Activated naive CD4-positive, alpha-beta T cell treated with anti-CD3 and anti-CD28 coated beads for 36 hours (primary cell): ENCODE measurements at regions of chr3 and their contacts with region 1.

Region 1: DNA sequence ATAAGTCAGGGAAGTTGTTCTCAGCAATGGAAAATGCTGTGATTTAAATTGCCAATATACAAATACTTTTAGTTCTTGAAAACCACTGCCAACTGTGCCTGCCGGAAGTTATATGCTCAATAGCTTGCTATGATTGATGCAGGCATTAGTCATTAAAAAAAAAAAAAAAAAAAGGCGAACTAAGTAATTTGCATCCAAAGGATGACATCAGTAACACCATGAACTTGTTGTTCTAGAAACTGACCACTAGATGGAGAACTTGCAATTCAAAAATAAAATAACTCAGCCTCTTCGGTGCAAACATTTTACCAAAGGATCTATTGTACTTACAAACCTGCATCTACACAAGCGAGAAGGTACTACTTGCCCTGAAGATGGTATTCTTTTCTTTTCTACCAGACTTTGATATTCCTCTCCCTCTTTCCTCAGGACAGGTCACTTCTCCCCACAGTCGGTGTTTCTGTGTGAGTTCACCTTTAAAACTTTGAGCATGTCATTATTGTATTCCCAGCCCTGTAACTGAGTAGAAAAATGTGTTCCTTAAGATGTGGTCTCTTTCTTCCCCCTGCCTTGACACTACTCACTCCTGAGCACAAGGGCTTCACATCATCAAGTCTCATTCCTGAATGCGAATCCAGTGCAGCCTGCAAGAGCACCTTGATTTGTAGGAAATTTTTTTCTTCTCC is 115.0 kb upstream of the VEPH1 start:
- DNase-seq: peak; percentile 26
- H3K4me3 Mint-ChIP-seq: no peak overlapping the region
- H3K27ac Mint-ChIP-seq: no peak overlapping the region
- H3K4me1 Mint-ChIP-seq: peaks cover 5% of the 10 kb centered on the region
- H3K27me3 Mint-ChIP-seq: peaks cover 13% of the 10 kb centered on the region

Region 2: DNA sequence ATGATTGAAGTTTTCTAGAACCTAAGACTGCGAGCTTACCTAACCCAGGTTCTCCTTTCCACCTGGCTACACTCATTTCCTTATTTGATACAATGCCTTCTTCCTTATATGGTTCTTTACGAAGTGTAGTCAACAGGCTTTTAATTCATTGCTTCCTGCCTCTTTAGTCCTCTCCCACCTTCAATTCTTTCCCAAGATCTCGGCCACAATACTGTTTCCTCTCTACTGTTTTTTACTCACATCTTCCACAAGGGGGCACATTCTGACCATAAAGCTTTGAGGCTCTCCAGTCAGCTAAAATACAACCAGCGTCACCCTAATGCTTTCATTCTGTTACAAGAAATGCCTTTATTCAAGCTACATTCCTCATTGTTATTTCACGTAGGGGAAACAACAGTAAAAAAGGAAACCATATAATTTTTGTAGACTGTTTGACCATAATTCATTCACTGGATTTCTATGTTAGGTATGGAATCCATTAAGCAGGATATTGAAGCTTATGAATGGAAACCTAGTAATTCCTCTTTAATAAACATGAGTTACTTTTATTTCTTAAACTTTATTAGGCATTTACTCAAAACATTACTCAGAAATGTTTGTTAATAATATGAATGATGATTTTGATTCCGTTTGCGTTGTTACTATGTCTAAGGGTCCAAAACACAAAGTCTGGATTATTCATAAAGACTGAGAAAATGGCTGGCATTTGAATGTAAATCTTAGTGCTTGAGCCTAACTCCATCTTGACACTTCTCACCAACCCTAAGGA is 85.5 kb before region 1 on chr3:
- CTCF ChIA-PET with region 1: interaction called, 3 read pairs
- intact Hi-C with region 1: loop called (anchors 1 kb)
- DNase-seq: peak; percentile 31
- H3K4me3 Mint-ChIP-seq: no peak overlapping the region
- H3K27ac Mint-ChIP-seq: no peak overlapping the region
- H3K4me1 Mint-ChIP-seq: no peaks in the 10 kb centered on the region
- H3K27me3 Mint-ChIP-seq: no peaks in the 10 kb centered on the region

Region 3: GRCh38 chr3:157606011-157606851 is 12.0 kb before region 1 on chr3:
- CTCF ChIA-PET with region 1: interaction called, 10 read pairs
- intact Hi-C with region 1: no loop called
- DNase-seq: peak; percentile 77
- H3K4me3 Mint-ChIP-seq: no peak overlapping the region
- H3K27ac Mint-ChIP-seq: no peak overlapping the region
- H3K4me1 Mint-ChIP-seq: peaks cover 7% of the 10 kb centered on the region
- H3K27me3 Mint-ChIP-seq: peaks cover 5% of the 10 kb centered on the region

Region 4: DNA sequence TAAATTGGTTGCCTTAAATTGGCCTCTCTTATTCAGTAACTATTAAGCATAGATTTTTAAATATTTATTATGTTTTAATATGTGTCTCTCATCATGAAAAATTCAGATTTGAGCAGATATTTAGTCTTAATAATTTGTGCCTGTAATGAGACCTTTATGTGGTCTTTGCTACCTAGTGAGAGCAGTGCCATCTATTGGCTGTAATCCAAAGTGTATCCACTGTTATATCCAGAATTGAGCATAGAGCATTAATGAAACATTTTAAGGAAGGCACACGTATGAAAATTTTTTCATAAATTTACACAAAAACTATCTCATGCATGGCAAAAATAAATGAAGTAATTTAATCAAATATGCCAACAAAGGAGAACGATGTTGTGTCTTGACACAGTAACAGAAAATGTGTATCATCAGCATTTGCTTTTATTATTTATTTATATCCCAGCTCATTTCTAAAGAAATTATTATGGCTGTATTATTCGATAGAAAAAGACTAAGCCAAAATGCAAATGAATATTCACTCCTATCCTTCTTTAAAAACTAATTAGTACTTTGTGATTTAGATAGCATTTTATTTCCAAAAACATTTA is 695.2 kb after region 1 on chr3:
- CTCF ChIA-PET with region 1: no interaction called
- intact Hi-C with region 1: loop called (anchors 2 kb)
- DNase-seq: no peak
- H3K4me3 Mint-ChIP-seq: no peak overlapping the region
- H3K27ac Mint-ChIP-seq: no peak overlapping the region
- H3K4me1 Mint-ChIP-seq: peaks cover 1% of the 10 kb centered on the region
- H3K27me3 Mint-ChIP-seq: no peaks in the 10 kb centered on the region

Region 5: GRCh38 chr3:158434412-158435038 is 816.3 kb after region 1 on chr3:
- CTCF ChIA-PET with region 1: no interaction called
- intact Hi-C with region 1: loop called (anchors 1 kb)
- DNase-seq: peak; percentile 63
- H3K4me3 Mint-ChIP-seq: no peak overlapping the region
- H3K27ac Mint-ChIP-seq: no peak overlapping the region
- H3K4me1 Mint-ChIP-seq: no peaks in the 10 kb centered on the region
- H3K27me3 Mint-ChIP-seq: no peaks in the 10 kb centered on the region

Region 6: DNA sequence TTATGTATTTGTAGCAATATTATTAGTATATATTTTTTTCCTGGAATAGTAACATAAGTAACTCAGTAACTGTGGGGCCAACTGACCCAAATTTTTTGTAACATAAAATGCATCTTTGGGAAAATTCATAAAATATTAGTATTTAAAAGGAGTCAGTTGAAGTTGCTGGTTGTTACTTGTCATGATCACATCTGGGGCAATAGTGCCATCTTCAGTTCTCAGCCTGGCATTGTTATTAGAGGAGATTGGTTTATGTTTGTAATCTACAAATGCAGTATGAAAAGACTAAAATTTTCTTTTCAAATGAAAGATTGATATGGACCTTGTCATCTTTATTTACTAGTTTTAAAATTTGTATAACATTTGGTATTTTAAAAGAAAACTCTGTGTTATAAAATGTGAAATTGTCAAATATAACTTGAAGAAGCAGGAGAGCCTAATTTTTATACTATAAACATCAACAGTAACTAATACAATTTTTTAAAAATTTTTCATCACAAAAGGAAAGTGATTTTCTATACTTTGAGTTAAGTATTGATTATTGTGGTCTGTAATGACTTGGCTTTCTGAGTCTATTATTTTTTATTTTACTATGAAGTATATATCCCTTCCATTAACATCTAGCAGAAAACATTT is 914.0 kb after region 1 on chr3:
- CTCF ChIA-PET with region 1: no interaction called
- intact Hi-C with region 1: loop called (anchors 1 kb)
- DNase-seq: peak; percentile 18
- H3K4me3 Mint-ChIP-seq: no peak overlapping the region
- H3K27ac Mint-ChIP-seq: no peak overlapping the region
- H3K4me1 Mint-ChIP-seq: no peaks in the 10 kb centered on the region
- H3K27me3 Mint-ChIP-seq: no peaks in the 10 kb centered on the region